Activated CD4-positive, alpha-beta memory T cell treated with anti-CD3 and anti-CD28 coated beads for 36 hours (primary cell): ENCODE measurements at regions of chr17 and their contacts with region 1.

Region 1: GRCh38 chr17:77494664-77495435 is 354.1 kb downstream of the SEC14L1 start:
- DNase-seq: peak; percentile 82
- H3K4me3 Mint-ChIP-seq: peak overlapping the region; percentile 4
- H3K27ac Mint-ChIP-seq: peak overlapping the region; percentile 75
- H3K4me1 Mint-ChIP-seq: peaks cover 13% of the 10 kb centered on the region
- H3K27me3 Mint-ChIP-seq: no peaks in the 10 kb centered on the region

Region 2: GRCh38 chr17:77372444-77373298 is 122.2 kb before region 1 on chr17:
- CTCF ChIA-PET with region 1: interaction called, 13 read pairs
- POLR2A ChIA-PET with region 1: no interaction called
- intact Hi-C with region 1: no loop called
- DNase-seq: peak; percentile 75
- H3K4me3 Mint-ChIP-seq: peak overlapping the region; percentile 73
- H3K27ac Mint-ChIP-seq: peak overlapping the region; percentile 73
- H3K4me1 Mint-ChIP-seq: peaks cover 62% of the 10 kb centered on the region
- H3K27me3 Mint-ChIP-seq: no peaks in the 10 kb centered on the region

Region 3: GRCh38 chr17:77429919-77430752 is 64.7 kb before region 1 on chr17:
- CTCF ChIA-PET with region 1: interaction called, 209 read pairs
- POLR2A ChIA-PET with region 1: no interaction called
- intact Hi-C with region 1: loop called (anchors 1 kb)
- DNase-seq: peak; percentile 90
- H3K4me3 Mint-ChIP-seq: no peak overlapping the region
- H3K27ac Mint-ChIP-seq: no peak overlapping the region
- H3K4me1 Mint-ChIP-seq: peaks cover 83% of the 10 kb centered on the region
- H3K27me3 Mint-ChIP-seq: no peaks in the 10 kb centered on the region

Region 4: DNA sequence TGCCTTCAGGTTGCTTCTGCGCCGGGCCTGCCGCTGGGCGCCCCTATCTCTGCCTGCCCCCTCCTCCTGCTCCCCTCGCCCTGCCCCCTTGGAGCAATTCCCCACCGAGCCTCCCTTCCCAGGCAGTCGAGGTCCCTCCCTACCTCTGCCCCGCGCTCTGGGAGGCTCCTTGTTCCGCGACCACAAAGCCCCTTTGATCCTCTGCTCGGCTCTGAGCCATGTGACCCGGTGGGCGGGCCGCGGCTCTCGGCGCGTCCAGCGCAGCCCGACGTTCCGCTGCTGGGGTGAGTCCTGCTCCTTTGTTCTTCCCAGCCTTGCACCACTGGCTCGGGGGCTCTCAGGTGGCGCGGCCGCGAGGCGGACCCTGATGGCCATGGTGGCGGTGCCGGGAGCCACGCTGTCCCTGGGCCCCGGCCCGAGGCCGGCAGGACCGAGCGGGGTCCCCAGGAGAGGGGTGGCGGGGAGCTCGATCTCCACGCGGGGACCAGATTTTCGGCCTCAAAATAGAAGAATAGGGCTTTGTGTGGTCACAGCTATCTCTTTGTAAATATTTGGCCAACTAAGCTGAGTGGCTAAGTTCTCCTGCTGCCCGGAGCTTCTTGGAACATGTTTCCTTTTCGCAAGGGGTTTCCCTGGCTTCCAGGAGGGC is 43.5 kb before region 1 on chr17:
- CTCF ChIA-PET with region 1: interaction called, 8 read pairs
- POLR2A ChIA-PET with region 1: interaction called, 3 read pairs
- intact Hi-C with region 1: loop called (anchors 5 kb)
- DNase-seq: peak; percentile 83
- H3K4me3 Mint-ChIP-seq: peak overlapping the region; percentile 91
- H3K27ac Mint-ChIP-seq: peak overlapping the region; percentile 100
- H3K4me1 Mint-ChIP-seq: peaks cover 41% of the 10 kb centered on the region
- H3K27me3 Mint-ChIP-seq: no peaks in the 10 kb centered on the region

Region 5: GRCh38 chr17:77471984-77472461 is 22.8 kb before region 1 on chr17:
- CTCF ChIA-PET with region 1: interaction called, 17 read pairs
- POLR2A ChIA-PET with region 1: no interaction called
- intact Hi-C with region 1: no loop called
- DNase-seq: peak; percentile 32
- H3K4me3 Mint-ChIP-seq: peak overlapping the region; percentile 62
- H3K27ac Mint-ChIP-seq: peak overlapping the region; percentile 86
- H3K4me1 Mint-ChIP-seq: peaks cover 97% of the 10 kb centered on the region
- H3K27me3 Mint-ChIP-seq: no peaks in the 10 kb centered on the region

Region 6: DNA sequence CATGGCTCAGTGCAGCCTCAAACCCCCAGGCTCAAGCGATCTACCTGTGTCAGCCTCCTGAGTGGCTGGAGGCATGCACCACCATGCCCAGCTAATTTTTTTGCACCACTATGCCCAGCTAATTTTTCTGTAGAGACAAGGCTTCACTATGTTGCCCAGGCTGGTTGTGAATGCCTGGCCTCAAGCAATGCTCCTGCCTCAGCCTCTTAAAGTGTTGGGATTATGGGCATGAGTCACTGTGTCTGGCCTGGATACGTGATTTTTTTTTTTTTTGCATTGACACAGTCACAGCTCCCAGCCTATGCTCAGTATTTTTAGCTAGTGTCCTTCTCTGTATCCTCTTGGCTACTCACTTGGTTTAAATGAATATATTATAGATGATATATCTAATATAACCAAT is 86.6 kb after region 1 on chr17:
- CTCF ChIA-PET with region 1: no interaction called
- POLR2A ChIA-PET with region 1: no interaction called
- intact Hi-C with region 1: no loop called
- DNase-seq: no peak
- H3K4me3 Mint-ChIP-seq: no peak overlapping the region
- H3K27ac Mint-ChIP-seq: no peak overlapping the region
- H3K4me1 Mint-ChIP-seq: no peaks in the 10 kb centered on the region
- H3K27me3 Mint-ChIP-seq: peaks cover 1% of the 10 kb centered on the region